Prostate gland (tissue), 2 donors: ENCODE measurements at regions of chr1 and their contacts with region 1.

Region 1: GRCh38 chr1:243850452-243851256 is 611 bp upstream of the AKT3 start:
- DNase-seq: peak; percentile 77
- H3K4me3 ChIP-seq: peak overlapping the region; percentile 89 to 91
- H3K27ac ChIP-seq: peak overlapping the region; percentile 99
- H3K4me1 ChIP-seq: no peaks in the 10 kb centered on the region
- H3K27me3 ChIP-seq: no peaks in the 10 kb centered on the region
- CTCF ChIP-seq: no peak
- POLR2A ChIP-seq: peak; percentile 69

Region 2: GRCh38 chr1:243482141-243483022 is 368.3 kb before region 1 on chr1:
- intact Hi-C with region 1: loop called (anchors 10 kb)
- DNase-seq: no peak
- H3K4me3 ChIP-seq: peak overlapping the region; percentile 40 to 48
- H3K27ac ChIP-seq: no peak overlapping the region
- H3K4me1 ChIP-seq: no peaks in the 10 kb centered on the region
- H3K27me3 ChIP-seq: no peaks in the 10 kb centered on the region
- CTCF ChIP-seq: no peak
- POLR2A ChIP-seq: no peak

Region 3: DNA sequence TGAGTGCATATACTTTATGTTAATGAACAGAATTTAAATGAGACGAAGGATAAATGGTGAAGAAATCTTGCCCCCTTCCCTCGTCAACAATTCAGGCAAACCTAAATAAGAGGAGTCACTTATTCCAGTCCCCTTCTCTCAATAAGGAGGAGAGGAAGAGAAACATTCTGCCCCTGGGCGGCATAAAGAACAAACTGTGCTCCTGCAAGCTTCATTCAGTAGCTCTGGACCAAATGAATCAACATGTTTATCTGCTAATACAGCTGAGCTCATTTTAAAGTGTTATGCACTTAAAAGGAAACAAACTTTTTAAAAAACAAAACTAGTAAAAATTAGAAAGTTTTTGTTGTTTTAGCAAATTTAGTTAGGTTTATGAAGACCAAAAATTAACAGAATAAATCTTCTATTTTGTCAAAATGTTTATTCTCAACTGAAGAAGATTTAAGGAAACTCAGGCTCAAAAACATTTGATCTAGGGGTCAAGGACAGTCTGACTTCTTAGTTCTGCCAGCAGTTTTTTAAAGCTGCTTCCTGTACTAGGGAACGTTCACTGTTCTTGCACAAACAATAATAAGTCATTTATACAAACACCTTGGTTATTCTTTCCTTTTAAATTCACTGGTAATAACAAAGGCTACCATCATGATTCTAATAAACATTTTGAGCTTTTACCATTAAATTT is 58.9 kb before region 1 on chr1:
- intact Hi-C with region 1: loop called (anchors 5 kb)
- DNase-seq: peak; percentile 38
- H3K4me3 ChIP-seq: no peak overlapping the region
- H3K27ac ChIP-seq: peak overlapping the region; percentile 68 to 77
- H3K4me1 ChIP-seq: peaks cover 8% of the 10 kb centered on the region
- H3K27me3 ChIP-seq: no peaks in the 10 kb centered on the region
- CTCF ChIP-seq: no peak
- POLR2A ChIP-seq: no peak

Region 4: GRCh38 chr1:244214009-244214967 is 363.6 kb after region 1 on chr1:
- intact Hi-C with region 1: loop called (anchors 10 kb)
- DNase-seq: peak; percentile 11
- H3K4me3 ChIP-seq: no peak overlapping the region
- H3K27ac ChIP-seq: peak overlapping the region in 1 of 2 donors; percentile 26
- H3K4me1 ChIP-seq: peaks cover 5% of the 10 kb centered on the region
- H3K27me3 ChIP-seq: no peaks in the 10 kb centered on the region
- CTCF ChIP-seq: no peak
- POLR2A ChIP-seq: no peak

Region 5: GRCh38 chr1:244451951-244452795 is 601.5 kb after region 1 on chr1:
- intact Hi-C with region 1: loop called (anchors 10 kb)
- DNase-seq: peak; percentile 99
- H3K4me3 ChIP-seq: peak overlapping the region; percentile 82 to 88
- H3K27ac ChIP-seq: peak overlapping the region; percentile 94 to 97
- H3K4me1 ChIP-seq: no peaks in the 10 kb centered on the region
- H3K27me3 ChIP-seq: no peaks in the 10 kb centered on the region
- CTCF ChIP-seq: peak; percentile 34 to 81 (median 58)
- POLR2A ChIP-seq: no peak

Region 6: GRCh38 chr1:244536316-244536715 is 685.7 kb after region 1 on chr1:
- intact Hi-C with region 1: no loop called
- DNase-seq: no peak
- H3K4me3 ChIP-seq: no peak overlapping the region
- H3K27ac ChIP-seq: no peak overlapping the region
- H3K4me1 ChIP-seq: no peaks in the 10 kb centered on the region
- H3K27me3 ChIP-seq: no peaks in the 10 kb centered on the region
- CTCF ChIP-seq: no peak
- POLR2A ChIP-seq: no peak

Region 7: DNA sequence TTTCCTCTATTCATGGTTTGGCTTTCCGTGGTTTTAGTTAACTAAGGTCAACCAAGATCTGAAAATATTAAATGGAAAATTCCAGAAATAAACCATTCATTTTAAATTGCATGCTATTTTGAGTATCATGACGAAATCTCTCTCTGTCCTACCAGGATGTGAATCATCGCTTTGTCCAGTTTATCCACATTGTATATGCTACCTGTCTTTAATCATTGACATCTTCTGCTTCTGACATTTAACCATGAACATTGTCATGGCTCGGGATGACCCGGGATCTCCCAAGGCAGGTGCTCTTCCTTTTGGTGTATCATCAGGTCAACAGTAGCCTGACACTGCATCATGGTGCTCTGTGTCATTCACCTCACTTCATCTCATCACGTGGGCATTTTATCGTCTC is 1139.2 kb after region 1 on chr1:
- intact Hi-C with region 1: no loop called
- DNase-seq: no peak
- H3K4me3 ChIP-seq: no peak overlapping the region
- H3K27ac ChIP-seq: no peak overlapping the region
- H3K4me1 ChIP-seq: no peaks in the 10 kb centered on the region
- H3K27me3 ChIP-seq: no peaks in the 10 kb centered on the region
- CTCF ChIP-seq: no peak
- POLR2A ChIP-seq: no peak